PC-9 (cell line): ENCODE measurements at regions of chr16 and their contacts with region 1.

Region 1: GRCh38 chr16:47713225-47713595 is 252.1 kb downstream of the PHKB start:
- DNase-seq: peak; percentile 31 to 64
- H3K4me3 ChIP-seq: no peak overlapping the region
- H3K27ac ChIP-seq: no peak overlapping the region
- H3K4me1 ChIP-seq: peaks cover 44% of the 10 kb centered on the region
- H3K27me3 ChIP-seq: no peaks in the 10 kb centered on the region
- CTCF ChIP-seq: no peak

Region 2: GRCh38 chr16:47779201-47780016 is 66.2 kb after region 1 on chr16:
- CTCF ChIA-PET with region 1: no interaction called
- POLR2A ChIA-PET with region 1: no interaction called
- intact Hi-C with region 1: loop called (anchors 10 kb)
- DNase-seq: no peak
- H3K4me3 ChIP-seq: no peak overlapping the region
- H3K27ac ChIP-seq: no peak overlapping the region
- H3K4me1 ChIP-seq: peaks cover 16% of the 10 kb centered on the region
- H3K27me3 ChIP-seq: no peaks in the 10 kb centered on the region
- CTCF ChIP-seq: no peak

Region 3: DNA sequence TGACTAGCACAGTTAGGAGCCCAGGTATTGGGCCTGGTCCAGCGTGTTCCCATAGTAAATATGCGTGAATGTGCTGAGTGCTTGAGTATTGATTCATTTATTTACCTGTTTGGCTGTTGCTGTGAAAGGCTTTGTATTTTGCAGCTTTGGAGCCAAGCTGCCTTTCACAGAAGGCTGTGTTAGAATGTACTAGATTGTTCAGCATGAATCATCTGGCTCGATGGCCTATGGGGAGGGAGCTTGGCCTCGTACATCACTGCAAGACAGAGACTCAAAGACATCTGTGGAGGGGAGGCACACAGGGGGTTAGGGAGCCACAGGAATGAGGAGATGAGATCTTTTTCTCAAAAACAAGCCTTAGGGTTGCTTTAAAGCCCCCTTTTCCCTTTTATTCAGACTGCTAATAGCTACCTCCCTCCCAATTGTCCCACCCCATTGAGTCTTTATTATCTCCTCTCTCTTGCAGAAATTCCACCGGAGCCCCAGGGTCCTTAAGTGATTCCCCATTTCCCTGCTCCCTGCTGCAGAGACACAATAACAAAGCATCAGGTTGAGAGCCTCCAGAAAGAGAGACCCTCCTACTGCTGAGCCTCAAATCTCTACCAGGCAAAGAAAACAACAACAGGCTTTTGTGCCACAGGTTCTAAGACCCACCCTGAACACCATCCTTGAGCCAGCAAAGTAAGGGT is 135.4 kb after region 1 on chr16:
- CTCF ChIA-PET with region 1: no interaction called
- POLR2A ChIA-PET with region 1: no interaction called
- intact Hi-C with region 1: loop called (anchors 10 kb)
- DNase-seq: no peak
- H3K4me3 ChIP-seq: no peak overlapping the region
- H3K27ac ChIP-seq: no peak overlapping the region
- H3K4me1 ChIP-seq: no peaks in the 10 kb centered on the region
- H3K27me3 ChIP-seq: no peaks in the 10 kb centered on the region
- CTCF ChIP-seq: no peak